Naive thymus-derived CD4-positive, alpha-beta T cell (primary cell): ENCODE measurements at regions of chr1 and their contacts with region 1.

Region 1: DNA sequence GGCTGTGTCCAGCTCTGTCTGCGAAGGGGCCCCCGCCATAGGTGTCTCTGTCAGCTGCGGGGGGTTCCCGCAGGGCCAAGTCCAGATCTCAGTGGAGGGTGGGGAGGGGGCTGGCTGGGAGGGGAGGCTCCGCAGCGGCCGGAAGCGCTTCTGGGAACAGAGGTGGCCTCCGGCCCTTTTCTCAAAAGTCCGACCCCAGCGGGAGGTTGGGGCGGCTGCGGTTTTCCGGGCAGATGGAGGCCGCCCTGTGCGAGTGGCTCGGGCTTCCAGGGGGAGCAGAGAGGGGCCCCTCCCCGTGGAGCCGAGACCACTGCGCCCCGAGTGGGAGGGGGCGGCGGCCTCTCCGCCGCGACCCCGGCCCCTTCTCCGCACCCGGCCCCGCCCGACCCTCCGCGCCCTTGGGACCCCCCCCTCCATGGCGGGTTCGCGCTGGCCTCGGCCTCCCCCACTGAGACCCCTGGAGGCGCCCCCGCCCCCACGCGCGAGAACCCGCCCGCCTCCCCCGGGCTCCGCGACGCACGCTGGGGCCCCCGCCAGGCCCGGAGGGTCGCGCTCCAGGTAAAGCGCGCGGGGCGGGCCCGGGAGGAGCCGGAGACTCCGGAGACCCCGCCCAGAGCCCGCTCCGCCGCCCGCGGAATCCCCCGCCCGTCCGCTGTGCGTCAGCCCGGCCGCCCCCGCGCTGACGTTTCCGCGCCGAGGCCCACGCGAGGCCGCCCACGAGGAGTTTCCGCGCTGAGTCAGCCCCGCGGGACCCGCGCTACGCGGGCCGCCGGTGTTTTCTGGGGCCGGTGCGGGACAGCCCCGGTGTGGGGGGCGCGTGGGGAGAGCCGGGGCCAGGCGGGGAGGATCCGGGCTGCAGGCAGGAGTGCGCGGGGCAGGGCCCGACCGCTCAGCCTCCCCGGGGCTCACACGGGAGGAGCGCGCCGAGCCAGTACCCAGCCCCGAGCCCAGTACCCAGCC is 5.3 kb downstream of the TNFRSF18 start:
- DNase-seq: peak; percentile 74 to 97 (median 83)
- ATAC-seq: peak; percentile 92
- H3K4me3 ChIP-seq: peak overlapping the region; percentile 24
- H3K4me3 Mint-ChIP-seq: peak overlapping the region in 9 of 10 donors; percentile 27 to 75 (median 59)
- H3K27ac ChIP-seq: peak overlapping the region; percentile 72
- H3K27ac Mint-ChIP-seq: peak overlapping the region in 5 of 9 donors; percentile 40 to 75 (median 62)
- H3K4me1 ChIP-seq: no peaks in the 10 kb centered on the region
- H3K4me1 Mint-ChIP-seq: peaks cover 0 to 11% (median 0%) of the 10 kb centered on the region in 7 donors
- H3K27me3 ChIP-seq: no peaks in the 10 kb centered on the region
- H3K27me3 Mint-ChIP-seq: no peaks in the 10 kb centered on the region

Region 2: GRCh38 chr1:1144122-1144842 is 56.8 kb before region 1 on chr1:
- CTCF ChIA-PET with region 1: no interaction called
- POLR2A ChIA-PET with region 1: no interaction called
- intact Hi-C with region 1: loop called (anchors 1 to 5 kb)
- DNase-seq: peak; percentile 40 to 79 (median 75)
- ATAC-seq: peak; percentile 93
- H3K4me3 ChIP-seq: no peak overlapping the region
- H3K4me3 Mint-ChIP-seq: peak overlapping the region; percentile 48 to 75 (median 61)
- H3K27ac ChIP-seq: peak overlapping the region; percentile 83
- H3K27ac Mint-ChIP-seq: peak overlapping the region; percentile 94 to 99 (median 96)
- H3K4me1 ChIP-seq: peaks cover 0 to 21% of the 10 kb centered on the region in 2 donors
- H3K4me1 Mint-ChIP-seq: peaks cover 6 to 21% (median 8%) of the 10 kb centered on the region in 7 donors
- H3K27me3 ChIP-seq: no peaks in the 10 kb centered on the region
- H3K27me3 Mint-ChIP-seq: no peaks in the 10 kb centered on the region